ENCODE measurements at regions of chr6 and their contacts with region 1.

Region 1: GRCh38 chr6:30616811-30617564 is at the start of gene PPP1R10:
- DNase-seq: peak; percentile 86 to 100 (median 99)
- ATAC-seq: peak; percentile 89
- H3K4me3 ChIP-seq: peak within 1 kb of the TSS; percentile 90
- H3K4me3 Mint-ChIP-seq: peak within 1 kb of the TSS; percentile 88 to 100 (median 96)
- H3K27ac ChIP-seq: peak within 1 kb of the TSS; percentile 93
- H3K27ac Mint-ChIP-seq: peak within 1 kb of the TSS; percentile 98 to 100 (median 100)
- H3K4me1 ChIP-seq: peaks cover 21 to 33% of the 10 kb centered on the region in 2 donors
- H3K4me1 Mint-ChIP-seq: peaks cover 28 to 51% (median 43%) of the 10 kb centered on the region in 7 donors
- H3K27me3 ChIP-seq: no peaks in the 10 kb centered on the region
- H3K27me3 Mint-ChIP-seq: peaks cover 0 to 14% (median 0%) of the 10 kb centered on the region in 5 donors
- total RNA-seq, gene PPP1R10: 108 to 286 (median 146) TPM

Region 2: DNA sequence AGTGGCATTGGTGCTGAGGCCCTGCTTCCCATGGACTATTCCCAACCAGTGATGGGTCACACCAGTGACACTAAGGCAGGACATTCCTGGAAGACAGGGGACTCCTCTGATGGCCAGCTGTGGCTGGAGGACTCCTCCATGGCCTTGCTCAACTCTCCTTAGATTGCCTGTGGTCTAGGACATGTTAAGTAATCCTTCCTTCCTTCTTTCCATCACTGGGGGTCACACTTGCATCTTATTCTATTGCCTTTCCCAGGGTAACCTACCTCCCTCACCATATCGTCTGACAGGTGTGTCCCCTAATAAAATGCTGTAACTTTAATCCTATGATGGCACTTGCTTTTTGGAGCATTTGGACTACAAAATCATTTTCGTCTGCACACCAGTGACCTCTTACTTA is 699.1 kb before region 1 on chr6:
- CTCF ChIA-PET with region 1: no interaction called
- POLR2A ChIA-PET with region 1: no interaction called
- intact Hi-C with region 1: no loop called
- DNase-seq: no peak
- ATAC-seq: no peak
- H3K4me3 ChIP-seq: no peak overlapping the region
- H3K4me3 Mint-ChIP-seq: no peak overlapping the region
- H3K27ac ChIP-seq: no peak overlapping the region
- H3K27ac Mint-ChIP-seq: no peak overlapping the region
- H3K4me1 ChIP-seq: no peaks in the 10 kb centered on the region
- H3K4me1 Mint-ChIP-seq: peaks cover 0 to 15% (median 0%) of the 10 kb centered on the region in 7 donors
- H3K27me3 ChIP-seq: no peaks in the 10 kb centered on the region
- H3K27me3 Mint-ChIP-seq: peaks cover 0 to 35% (median 0%) of the 10 kb centered on the region in 5 donors

Region 3: DNA sequence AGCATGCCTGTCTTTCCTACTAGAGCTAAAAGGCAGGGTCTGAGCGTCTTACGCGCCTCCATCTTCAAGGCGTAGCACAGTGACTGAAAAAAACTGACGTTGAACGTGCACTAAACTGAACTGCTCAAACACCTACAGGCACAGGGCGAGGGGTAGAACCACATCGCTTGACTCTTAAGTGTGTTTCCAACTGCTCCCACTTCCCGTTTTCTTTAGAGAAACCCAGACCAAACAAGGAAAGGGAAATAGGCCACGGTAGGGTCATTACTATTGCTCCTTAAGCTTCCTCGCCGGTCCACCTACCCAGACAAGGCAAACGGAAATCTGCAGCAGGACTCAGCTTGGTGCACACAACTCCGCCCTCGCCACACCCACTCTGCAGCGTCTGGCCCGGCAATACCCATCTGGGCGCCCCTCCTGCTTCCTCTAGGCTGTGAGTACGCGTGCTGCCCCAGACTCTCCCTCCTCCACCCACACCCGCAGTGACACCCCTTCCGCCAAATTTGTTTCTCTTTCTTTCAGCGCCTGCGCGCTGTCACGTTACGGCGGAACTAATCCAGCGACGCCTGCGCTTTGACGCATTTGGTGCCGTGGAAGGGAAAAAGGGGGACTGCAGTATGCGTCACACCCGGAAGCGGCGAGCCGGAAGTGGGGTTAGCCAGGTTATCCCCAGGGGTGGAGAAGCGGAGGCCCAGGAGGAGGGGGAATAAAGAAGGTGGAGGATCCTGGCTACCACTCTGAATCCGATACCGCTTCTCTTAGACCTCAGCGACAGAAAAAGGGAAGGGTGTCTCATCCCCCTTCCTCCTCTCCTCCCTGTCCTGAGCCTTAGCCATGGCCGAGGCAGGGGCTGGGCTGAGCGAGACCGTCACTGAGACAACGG is 550.2 kb before region 1 on chr6 and contains the start of gene PPP1R11:
- CTCF ChIA-PET with region 1: no interaction called
- POLR2A ChIA-PET with region 1: interaction called, 5 read pairs
- intact Hi-C with region 1: loop called (anchors 2 kb)
- DNase-seq: peak; percentile 84 to 100 (median 99)
- ATAC-seq: peak; percentile 99
- H3K4me3 ChIP-seq: peak within 1 kb of the TSS; percentile 94
- H3K4me3 Mint-ChIP-seq: peak within 1 kb of the TSS; percentile 87 to 100 (median 98)
- H3K27ac ChIP-seq: peak within 1 kb of the TSS; percentile 96
- H3K27ac Mint-ChIP-seq: peak within 1 kb of the TSS; percentile 96 to 100 (median 99)
- H3K4me1 ChIP-seq: peaks cover 28 to 41% of the 10 kb centered on the region in 2 donors
- H3K4me1 Mint-ChIP-seq: peaks cover 43 to 77% (median 71%) of the 10 kb centered on the region in 7 donors
- H3K27me3 ChIP-seq: no peaks in the 10 kb centered on the region
- H3K27me3 Mint-ChIP-seq: peaks cover 10 to 22% (median 16%) of the 10 kb centered on the region in 5 donors
- total RNA-seq, gene PPP1R11: 49.4 to 67.1 (median 62.7) TPM

Region 4: GRCh38 chr6:30500421-30501355 is 116.3 kb before region 1 on chr6:
- CTCF ChIA-PET with region 1: no interaction called
- POLR2A ChIA-PET with region 1: interaction called, 12 read pairs
- intact Hi-C with region 1: no loop called
- DNase-seq: no peak
- ATAC-seq: peak; percentile 35
- H3K4me3 ChIP-seq: peak overlapping the region; percentile 48
- H3K4me3 Mint-ChIP-seq: peak overlapping the region; percentile 76 to 89 (median 86)
- H3K27ac ChIP-seq: peak overlapping the region; percentile 36
- H3K27ac Mint-ChIP-seq: peak overlapping the region; percentile 39 to 93 (median 85)
- H3K4me1 ChIP-seq: peaks cover 9 to 31% of the 10 kb centered on the region in 2 donors
- H3K4me1 Mint-ChIP-seq: peaks cover 24 to 50% (median 46%) of the 10 kb centered on the region in 7 donors
- H3K27me3 ChIP-seq: no peaks in the 10 kb centered on the region
- H3K27me3 Mint-ChIP-seq: no peaks in the 10 kb centered on the region

Region 5: DNA sequence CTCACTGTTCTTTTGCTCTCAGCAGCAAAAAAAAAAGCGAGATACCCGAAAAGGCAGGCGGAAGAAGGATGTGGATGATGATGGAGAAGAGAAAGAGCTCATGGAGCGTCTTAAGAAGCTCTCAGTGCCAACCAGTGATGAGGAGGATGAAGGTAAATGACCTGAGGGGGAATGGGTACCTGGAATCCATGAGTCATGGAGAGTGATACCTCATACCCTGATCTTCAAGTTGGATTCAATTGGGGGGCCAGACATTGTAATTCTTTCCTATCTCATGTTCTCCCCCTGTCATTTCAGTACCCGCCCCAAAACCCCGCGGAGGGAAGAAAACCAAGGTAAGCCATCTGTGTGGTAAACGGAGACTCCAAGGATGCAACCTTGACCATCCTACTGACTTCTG is 38.9 kb before region 1 on chr6:
- CTCF ChIA-PET with region 1: no interaction called
- POLR2A ChIA-PET with region 1: interaction called, 15 read pairs
- intact Hi-C with region 1: no loop called
- DNase-seq: no peak
- ATAC-seq: no peak
- H3K4me3 ChIP-seq: no peak overlapping the region
- H3K4me3 Mint-ChIP-seq: no peak overlapping the region
- H3K27ac ChIP-seq: no peak overlapping the region
- H3K27ac Mint-ChIP-seq: peak overlapping the region in 3 of 9 donors; percentile 25 to 47 (median 31)
- H3K4me1 ChIP-seq: peaks cover 7 to 17% of the 10 kb centered on the region in 2 donors
- H3K4me1 Mint-ChIP-seq: peaks cover 27 to 42% (median 34%) of the 10 kb centered on the region in 7 donors
- H3K27me3 ChIP-seq: no peaks in the 10 kb centered on the region
- H3K27me3 Mint-ChIP-seq: no peaks in the 10 kb centered on the region

Region 6: GRCh38 chr6:30686908-30687658 is 70.1 kb after region 1 on chr6:
- CTCF ChIA-PET with region 1: no interaction called
- POLR2A ChIA-PET with region 1: interaction called, 19 read pairs
- intact Hi-C with region 1: loop called (anchors 1 kb)
- DNase-seq: peak; percentile 34 to 89 (median 42)
- ATAC-seq: peak; percentile 58
- H3K4me3 ChIP-seq: peak overlapping the region; percentile 98
- H3K4me3 Mint-ChIP-seq: peak overlapping the region; percentile 90 to 100 (median 97)
- H3K27ac ChIP-seq: peak overlapping the region; percentile 95
- H3K27ac Mint-ChIP-seq: peak overlapping the region; percentile 88 to 99 (median 97)
- H3K4me1 ChIP-seq: peaks cover 21 to 31% of the 10 kb centered on the region in 2 donors
- H3K4me1 Mint-ChIP-seq: peaks cover 45 to 56% (median 46%) of the 10 kb centered on the region in 7 donors
- H3K27me3 ChIP-seq: no peaks in the 10 kb centered on the region
- H3K27me3 Mint-ChIP-seq: no peaks in the 10 kb centered on the region

Region 7: DNA sequence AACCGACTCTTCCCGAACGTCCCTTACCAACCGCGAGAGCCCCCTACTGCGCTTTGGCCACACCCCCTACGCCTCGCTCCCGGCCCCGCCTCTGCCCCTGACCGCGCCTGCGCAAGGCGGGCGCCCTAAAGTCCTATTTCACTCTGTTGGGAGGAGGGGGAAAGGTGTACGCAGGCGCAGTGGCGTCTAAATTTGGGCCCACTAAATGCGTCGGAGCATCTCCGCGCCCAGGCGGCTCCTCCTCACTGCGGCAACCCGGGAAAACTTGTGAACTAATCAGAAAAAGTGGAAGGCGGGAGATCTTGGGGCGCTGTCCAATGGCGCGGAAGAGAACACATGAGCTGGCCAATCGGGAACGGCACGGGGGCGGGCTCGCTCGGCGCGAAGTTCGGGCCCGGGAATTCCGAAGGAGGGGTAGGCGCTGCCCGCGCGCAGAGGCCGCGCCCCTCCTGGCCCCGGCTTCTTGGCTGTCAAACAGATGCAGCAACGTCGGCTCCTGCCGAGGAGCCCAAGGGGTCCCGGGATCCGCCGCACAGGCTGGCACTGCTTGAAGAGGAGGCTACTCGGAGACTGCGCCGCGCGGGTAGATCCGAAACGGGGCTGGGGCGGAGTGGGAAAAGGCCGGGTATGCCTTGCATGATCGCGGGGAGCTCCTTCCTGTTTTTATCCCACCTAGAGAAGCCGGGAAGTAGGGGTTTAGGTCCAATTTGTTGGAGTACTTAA is 541.3 kb after region 1 on chr6 and contains the start of gene TCF19:
- CTCF ChIA-PET with region 1: no interaction called
- POLR2A ChIA-PET with region 1: no interaction called
- intact Hi-C with region 1: loop called (anchors 1 kb)
- DNase-seq: peak; percentile 97 to 99 (median 98)
- ATAC-seq: peak; percentile 96
- H3K4me3 ChIP-seq: peak within 1 kb of the TSS; percentile 82
- H3K4me3 Mint-ChIP-seq: peak within 1 kb of the TSS; percentile 82 to 97 (median 91)
- H3K27ac ChIP-seq: peak within 1 kb of the TSS; percentile 82
- H3K27ac Mint-ChIP-seq: peak within 1 kb of the TSS; percentile 62 to 96 (median 89)
- H3K4me1 ChIP-seq: peaks cover 12 to 18% of the 10 kb centered on the region in 2 donors
- H3K4me1 Mint-ChIP-seq: peaks cover 21 to 56% (median 29%) of the 10 kb centered on the region in 7 donors
- H3K27me3 ChIP-seq: no peaks in the 10 kb centered on the region
- H3K27me3 Mint-ChIP-seq: peaks cover 0 to 2% (median 0%) of the 10 kb centered on the region in 5 donors
- total RNA-seq, gene TCF19: 4.3 to 78.9 (median 9.4) TPM

Region 8: DNA sequence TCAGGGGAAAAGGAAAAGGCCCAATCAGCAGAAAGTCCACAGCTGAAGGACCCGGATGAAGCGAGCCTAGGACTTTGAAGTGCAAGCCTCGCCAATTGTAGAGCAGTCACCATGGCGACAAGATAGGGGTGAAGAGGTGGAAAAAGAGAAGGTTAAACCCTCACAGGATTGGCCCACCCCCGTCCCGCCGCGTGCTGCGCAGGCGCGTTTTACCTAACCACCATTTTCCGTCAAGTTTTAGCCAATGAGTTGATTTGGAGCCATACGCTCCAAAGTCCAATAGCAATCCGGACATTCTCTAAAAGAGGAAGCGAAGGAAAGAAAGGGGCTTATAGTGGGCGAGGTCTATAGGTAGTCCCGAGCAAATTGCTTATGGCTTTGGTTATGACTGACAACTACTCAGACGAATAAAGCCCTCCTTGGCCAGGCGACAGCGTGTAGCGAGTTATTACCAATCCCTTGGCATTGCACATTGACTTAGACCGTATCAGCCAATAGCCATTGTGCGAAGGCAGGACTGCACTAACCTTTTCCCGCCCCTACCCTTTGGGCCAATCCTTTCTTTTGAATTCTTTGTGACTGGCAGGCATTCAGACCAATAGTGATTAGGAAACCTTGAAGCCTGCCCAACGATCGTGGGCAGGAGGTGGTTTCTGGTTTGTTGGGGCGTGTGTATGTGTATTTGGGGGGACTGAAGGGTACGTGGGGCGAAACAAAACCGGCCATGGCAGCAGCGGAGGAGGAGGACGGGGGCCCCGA is 1561.0 kb after region 1 on chr6 and contains the start of gene RNF5:
- CTCF ChIA-PET with region 1: no interaction called
- POLR2A ChIA-PET with region 1: no interaction called
- intact Hi-C with region 1: loop called in 1 of 2 experiments (anchors 5 kb)
- DNase-seq: peak; percentile 60 to 99 (median 97)
- ATAC-seq: peak; percentile 89
- H3K4me3 ChIP-seq: peak within 1 kb of the TSS; percentile 82
- H3K4me3 Mint-ChIP-seq: peak within 1 kb of the TSS; percentile 85 to 98 (median 95)
- H3K27ac ChIP-seq: peak within 1 kb of the TSS; percentile 91
- H3K27ac Mint-ChIP-seq: peak within 1 kb of the TSS; percentile 87 to 100 (median 95)
- H3K4me1 ChIP-seq: peaks cover 31 to 63% of the 10 kb centered on the region in 2 donors
- H3K4me1 Mint-ChIP-seq: peaks cover 63 to 86% (median 69%) of the 10 kb centered on the region in 7 donors
- H3K27me3 ChIP-seq: no peaks in the 10 kb centered on the region
- H3K27me3 Mint-ChIP-seq: no peaks in the 10 kb centered on the region
- total RNA-seq, gene RNF5: 17.0 to 50.6 (median 40.9) TPM